HCT116 (cell line): ENCODE measurements at regions of chr3 and their contacts with region 1.

Region 1: DNA sequence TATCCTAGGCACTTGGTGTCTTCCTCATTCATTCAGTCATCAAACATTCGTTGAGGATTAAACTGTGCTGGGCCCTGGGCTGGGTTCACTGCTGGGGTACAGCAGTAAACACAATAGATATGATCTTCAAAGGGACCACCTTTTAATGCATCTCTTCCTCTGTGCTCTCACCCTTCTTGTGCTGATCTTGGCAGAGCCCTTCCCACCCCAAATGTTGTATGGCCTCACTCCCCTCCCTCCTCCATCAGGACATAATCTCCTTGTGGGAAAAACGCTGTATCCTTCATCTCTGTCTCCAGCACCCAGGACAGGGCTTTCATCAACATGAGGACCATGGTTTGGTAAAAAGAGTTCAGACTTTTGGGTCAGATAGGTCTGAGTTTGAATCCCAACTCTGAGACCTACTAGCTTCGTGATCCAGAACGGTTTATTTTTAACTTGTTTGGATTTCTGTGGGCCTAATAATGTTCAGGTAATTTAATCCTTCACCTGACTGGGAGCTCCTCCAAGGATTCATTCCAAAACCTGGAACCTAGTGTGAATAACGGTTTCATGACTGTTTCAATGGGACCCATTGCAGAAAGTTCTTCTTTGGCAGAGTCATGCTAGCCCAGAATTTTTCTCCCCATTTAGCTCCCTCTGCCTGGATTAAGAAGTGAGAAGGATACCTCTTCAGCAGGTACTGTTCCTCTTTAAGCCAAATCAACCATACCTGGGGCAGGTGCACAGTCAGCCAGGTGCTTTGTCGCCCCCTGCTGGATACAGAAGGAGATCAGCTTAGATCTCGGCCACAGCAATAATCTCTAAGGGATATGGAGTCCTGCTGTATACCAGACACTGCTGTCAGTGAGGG is 5.2 kb upstream of the WNT7A start:
- DNase-seq: peak; percentile 56
- ATAC-seq: peak; percentile 86
- H3K4me3 ChIP-seq: no peak overlapping the region
- H3K27ac ChIP-seq: no peak overlapping the region
- H3K4me1 ChIP-seq: peaks cover 0 to 12% of the 10 kb centered on the region in 2 experiments; a peak in 3 of 4 replicates
- H3K27me3 ChIP-seq: 0 out of 2 replicates have a peak, but pooled peaks cover 2% of the 10 kb centered on the region
- CTCF ChIP-seq: peak; percentile 90 to 96 (median 92)
- POLR2A ChIP-seq: no peak
- RAD21 ChIP-seq: peak; percentile 97

Region 2: GRCh38 chr3:13316603-13317002 is 568.5 kb before region 1 on chr3:
- CTCF ChIA-PET with region 1: no interaction called
- POLR2A ChIA-PET with region 1: no interaction called
- RAD21 ChIA-PET with region 1: no interaction called
- intact Hi-C with region 1: no loop called
- DNase-seq: no peak
- ATAC-seq: no peak
- H3K4me3 ChIP-seq: no peak overlapping the region
- H3K27ac ChIP-seq: no peak overlapping the region
- H3K4me1 ChIP-seq: no peaks in the 10 kb centered on the region
- H3K27me3 ChIP-seq: no peaks in the 10 kb centered on the region
- CTCF ChIP-seq: no peak
- POLR2A ChIP-seq: no peak
- RAD21 ChIP-seq: no peak

Region 3: DNA sequence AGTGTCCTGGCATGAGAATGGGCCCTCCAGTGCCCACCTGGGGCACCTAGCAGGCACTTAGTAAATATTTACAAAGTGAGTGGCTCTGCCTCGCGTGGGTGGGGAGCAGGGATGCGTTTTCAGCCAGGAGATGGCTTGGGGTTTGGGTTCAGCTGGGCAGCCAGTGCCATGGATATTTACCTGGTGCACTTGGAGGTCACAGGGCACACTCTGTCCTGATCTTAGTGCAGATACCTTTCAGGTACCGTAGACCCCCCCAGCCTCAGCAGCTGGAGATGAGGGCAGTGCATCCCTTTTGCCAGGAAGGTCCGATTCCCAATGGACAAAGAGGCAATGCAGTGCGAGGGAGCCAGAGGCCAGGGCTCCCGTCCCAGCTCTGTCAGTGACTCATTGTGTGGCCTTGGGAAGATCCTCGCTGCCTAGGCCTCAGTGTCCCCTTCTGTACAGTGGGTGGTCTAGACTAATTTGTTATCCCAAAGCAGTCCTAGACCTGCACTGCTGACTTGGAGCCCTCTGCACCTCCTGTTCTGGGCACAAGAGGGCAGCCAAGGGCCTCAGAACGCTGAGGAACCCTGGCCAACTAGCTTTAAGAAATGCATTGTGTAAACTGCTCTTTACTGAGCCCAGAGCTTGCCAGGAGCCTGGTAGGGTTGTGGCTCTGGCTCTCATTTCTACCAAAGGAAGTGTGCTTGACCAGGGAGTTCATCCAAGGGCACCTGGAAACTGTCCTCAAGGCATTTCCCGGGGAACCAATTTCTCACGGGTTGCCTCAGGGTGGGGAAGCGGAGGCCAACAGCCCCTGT is 389.0 kb before region 1 on chr3:
- CTCF ChIA-PET with region 1: interaction called, 5 read pairs
- POLR2A ChIA-PET with region 1: no interaction called
- RAD21 ChIA-PET with region 1: no interaction called
- intact Hi-C with region 1: loop called (anchors 5 kb)
- DNase-seq: peak; percentile 48
- ATAC-seq: peak; percentile 81
- H3K4me3 ChIP-seq: no peak overlapping the region
- H3K27ac ChIP-seq: no peak overlapping the region
- H3K4me1 ChIP-seq: peaks cover 0 to 11% of the 10 kb centered on the region in 2 experiments; a peak in 1 of 4 replicates
- H3K27me3 ChIP-seq: no peaks in the 10 kb centered on the region
- CTCF ChIP-seq: peak; percentile 93 to 96 (median 94)
- POLR2A ChIP-seq: no peak
- RAD21 ChIP-seq: peak; percentile 98

Region 4: GRCh38 chr3:13648060-13649001 is 236.7 kb before region 1 on chr3:
- CTCF ChIA-PET with region 1: interaction called, 297 read pairs
- POLR2A ChIA-PET with region 1: no interaction called
- RAD21 ChIA-PET with region 1: no interaction called
- intact Hi-C with region 1: no loop called
- DNase-seq: peak; percentile 75
- ATAC-seq: peak; percentile 81
- H3K4me3 ChIP-seq: peak overlapping the region in 1 of 2 experiments; percentile 1; a peak in 1 of 4 replicates
- H3K27ac ChIP-seq: no peak overlapping the region
- H3K4me1 ChIP-seq: peaks cover 9 to 45% of the 10 kb centered on the region in 2 experiments; a peak in 3 of 4 replicates
- H3K27me3 ChIP-seq: no peaks in the 10 kb centered on the region
- CTCF ChIP-seq: peak in 2 of 3 experiments; percentile 98 to 99; a peak in 4 of 6 replicates
- POLR2A ChIP-seq: no peak
- RAD21 ChIP-seq: no peak

Region 5: DNA sequence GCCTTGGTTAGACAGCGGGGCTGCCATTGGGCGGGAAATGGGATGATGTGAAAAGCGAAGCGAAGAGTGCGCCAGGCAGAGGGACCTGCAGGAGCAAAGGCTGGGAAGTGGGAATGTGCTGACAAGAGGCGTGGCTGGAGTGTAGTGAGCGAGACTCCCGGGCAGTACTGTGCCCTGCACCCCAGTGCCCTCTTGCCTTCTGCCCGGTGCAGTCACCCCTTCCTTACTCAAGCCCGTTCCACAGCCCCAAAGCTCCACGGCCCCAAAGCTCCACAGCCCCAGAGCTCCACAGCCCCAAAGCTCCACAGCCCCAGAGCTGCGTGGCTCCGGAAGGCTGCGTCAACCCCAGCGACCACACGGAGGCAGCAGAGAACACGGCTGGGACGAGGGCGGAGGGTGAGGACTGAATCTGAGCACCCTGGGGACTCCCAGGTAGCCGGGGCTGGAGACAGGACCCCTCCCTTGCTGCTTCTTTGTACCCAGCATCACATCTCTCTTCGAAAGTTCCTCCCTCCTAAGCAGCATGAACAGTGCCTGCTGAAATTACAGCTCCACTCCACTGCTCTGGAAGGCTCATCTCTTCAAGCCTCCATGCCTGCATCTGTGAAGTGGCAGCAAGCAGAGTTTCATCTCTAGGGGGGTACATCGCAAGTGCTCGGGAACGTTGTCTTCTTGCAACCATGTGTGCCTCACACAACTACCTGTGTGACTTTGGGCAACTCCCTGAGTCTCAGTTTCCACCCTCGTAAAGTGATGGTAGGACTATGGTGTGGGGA is 227.2 kb before region 1 on chr3:
- CTCF ChIA-PET with region 1: interaction called, 297 read pairs
- POLR2A ChIA-PET with region 1: no interaction called
- RAD21 ChIA-PET with region 1: interaction called, 17 to 21 read pairs
- intact Hi-C with region 1: loop called (anchors 1 kb)
- DNase-seq: peak; percentile 26
- ATAC-seq: peak; percentile 91
- H3K4me3 ChIP-seq: no peak overlapping the region
- H3K27ac ChIP-seq: no peak overlapping the region
- H3K4me1 ChIP-seq: peaks cover under 1 to 23% of the 10 kb centered on the region in 2 experiments; a peak in 3 of 4 replicates
- H3K27me3 ChIP-seq: no peaks in the 10 kb centered on the region
- CTCF ChIP-seq: peak in 2 of 3 experiments; percentile 88 to 93; a peak in 4 of 6 replicates
- POLR2A ChIP-seq: no peak
- RAD21 ChIP-seq: no peak

Region 6: GRCh38 chr3:13767896-13768295 is 117.2 kb before region 1 on chr3:
- CTCF ChIA-PET with region 1: interaction called, 3 read pairs
- POLR2A ChIA-PET with region 1: no interaction called
- RAD21 ChIA-PET with region 1: no interaction called
- intact Hi-C with region 1: loop called (anchors 10 kb)
- DNase-seq: no peak
- ATAC-seq: no peak
- H3K4me3 ChIP-seq: no peak overlapping the region
- H3K27ac ChIP-seq: no peak overlapping the region
- H3K4me1 ChIP-seq: no peaks in the 10 kb centered on the region
- H3K27me3 ChIP-seq: no peaks in the 10 kb centered on the region
- CTCF ChIP-seq: no peak
- POLR2A ChIP-seq: no peak
- RAD21 ChIP-seq: no peak